Calu3 (cell line): ENCODE measurements at regions of chr11 and their contacts with region 1.

Region 1: DNA sequence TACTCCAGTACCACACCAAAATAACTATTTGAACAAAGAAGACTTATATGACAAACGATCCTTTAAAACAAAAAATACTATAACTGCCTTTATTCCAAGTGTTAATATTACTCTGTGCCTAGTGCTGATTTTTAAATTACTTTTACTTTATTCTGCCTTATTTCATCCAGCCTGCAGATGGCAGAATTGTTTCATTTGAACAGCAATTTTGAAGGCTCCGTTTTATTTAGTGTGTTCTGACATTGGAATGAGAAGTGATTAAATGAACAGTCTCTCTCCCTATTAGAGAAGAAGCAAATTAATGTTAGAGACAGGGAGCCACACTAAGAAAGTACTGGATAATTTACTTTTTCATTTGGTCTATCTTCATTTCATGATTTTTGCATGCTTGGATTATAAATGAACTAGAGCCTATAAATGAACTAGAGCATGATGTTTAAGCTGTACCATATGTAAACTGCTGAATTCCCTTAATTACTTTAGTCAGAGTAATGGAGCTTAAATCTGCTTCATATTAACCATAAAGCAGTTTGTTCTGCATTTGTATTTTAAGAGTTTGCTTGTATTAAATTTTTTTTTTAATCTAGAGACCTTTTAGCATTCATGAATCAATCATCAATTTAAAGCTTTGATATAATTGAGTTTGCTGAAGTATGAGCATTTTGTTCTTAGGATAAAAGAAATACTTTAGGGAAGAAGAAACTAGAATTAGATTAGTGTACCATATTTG is 9.8 kb downstream of the PDHX start:
- DNase-seq: peak; percentile 38
- H3K4me3 Mint-ChIP-seq: peak overlapping the region; percentile 5
- H3K27ac Mint-ChIP-seq: peak overlapping the region; percentile 38
- H3K4me1 Mint-ChIP-seq: peaks cover 49% of the 10 kb centered on the region
- H3K27me3 Mint-ChIP-seq: no peaks in the 10 kb centered on the region
- CTCF ChIP-seq: peak; percentile 54

Region 2: GRCh38 chr11:34977089-34977906 is 51.0 kb after region 1 on chr11:
- CTCF ChIA-PET with region 1: interaction called, 4 read pairs
- intact Hi-C with region 1: loop called (anchors 5 kb)
- DNase-seq: no peak
- H3K4me3 Mint-ChIP-seq: no peak overlapping the region
- H3K27ac Mint-ChIP-seq: no peak overlapping the region
- H3K4me1 Mint-ChIP-seq: peaks cover 44% of the 10 kb centered on the region
- H3K27me3 Mint-ChIP-seq: no peaks in the 10 kb centered on the region
- CTCF ChIP-seq: no peak

Region 3: GRCh38 chr11:34997952-34998528 is 71.8 kb after region 1 on chr11:
- CTCF ChIA-PET with region 1: no interaction called
- intact Hi-C with region 1: loop called (anchors 5 kb)
- DNase-seq: no peak
- H3K4me3 Mint-ChIP-seq: peak overlapping the region; percentile 57
- H3K27ac Mint-ChIP-seq: peak overlapping the region; percentile 82
- H3K4me1 Mint-ChIP-seq: peaks cover 23% of the 10 kb centered on the region
- H3K27me3 Mint-ChIP-seq: no peaks in the 10 kb centered on the region
- CTCF ChIP-seq: no peak